ENCODE measurements at regions of chr21 and their contacts with region 1.

Region 1: DNA sequence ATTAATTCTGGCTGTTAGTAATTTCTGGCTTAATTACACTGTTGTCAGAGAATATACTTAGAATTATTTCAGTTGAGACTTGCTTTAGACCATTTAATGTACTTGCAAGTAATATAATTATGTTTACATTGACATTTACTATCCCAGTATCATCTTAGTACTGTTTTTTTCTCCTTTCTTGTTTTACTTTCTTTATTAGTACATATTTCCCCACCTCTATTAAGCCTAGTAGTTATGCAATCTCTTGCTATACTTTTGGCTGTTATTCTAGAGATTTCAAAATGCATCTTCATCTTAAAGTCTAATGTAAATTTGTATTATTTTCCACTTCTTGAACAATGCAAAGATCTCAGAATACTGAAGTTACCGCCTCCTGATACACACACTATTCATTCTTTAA is 24.4 kb downstream of the BRWD1 start:
- DNase-seq: no peak
- ATAC-seq: no peak
- H3K4me3 ChIP-seq: no peak overlapping the region
- H3K27ac ChIP-seq: no peak overlapping the region
- H3K4me1 ChIP-seq: no peaks in the 10 kb centered on the region
- H3K27me3 ChIP-seq: no peaks in the 10 kb centered on the region
- CTCF ChIP-seq: no peak

Region 2: DNA sequence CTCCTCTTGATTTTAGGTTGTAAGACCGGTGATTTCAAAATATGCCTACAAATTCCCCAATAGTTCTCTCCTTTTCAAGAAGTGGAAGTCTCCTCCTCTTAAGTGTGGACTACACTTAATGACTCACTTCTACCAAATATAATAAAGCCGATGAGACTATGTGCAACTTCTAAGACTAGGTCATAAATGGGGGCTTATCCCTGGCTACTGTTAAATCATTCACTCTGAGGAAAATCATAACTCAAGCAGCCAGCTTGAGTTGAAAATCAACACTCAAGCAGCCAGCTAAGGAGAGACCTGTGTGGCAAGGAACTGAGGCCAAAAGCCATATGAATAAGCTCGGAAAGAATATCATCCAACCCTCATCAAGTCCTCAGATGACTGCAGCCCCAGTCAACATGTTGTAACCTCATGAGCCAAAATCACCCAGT is 56.1 kb before region 1 on chr21:
- CTCF ChIA-PET with region 1: no interaction called
- POLR2A ChIA-PET with region 1: no interaction called
- intact Hi-C with region 1: no loop called
- DNase-seq: no peak
- ATAC-seq: peak; percentile 37
- H3K4me3 ChIP-seq: no peak overlapping the region
- H3K27ac ChIP-seq: no peak overlapping the region
- H3K4me1 ChIP-seq: no peaks in the 10 kb centered on the region
- H3K27me3 ChIP-seq: no peaks in the 10 kb centered on the region
- CTCF ChIP-seq: no peak

Region 3: DNA sequence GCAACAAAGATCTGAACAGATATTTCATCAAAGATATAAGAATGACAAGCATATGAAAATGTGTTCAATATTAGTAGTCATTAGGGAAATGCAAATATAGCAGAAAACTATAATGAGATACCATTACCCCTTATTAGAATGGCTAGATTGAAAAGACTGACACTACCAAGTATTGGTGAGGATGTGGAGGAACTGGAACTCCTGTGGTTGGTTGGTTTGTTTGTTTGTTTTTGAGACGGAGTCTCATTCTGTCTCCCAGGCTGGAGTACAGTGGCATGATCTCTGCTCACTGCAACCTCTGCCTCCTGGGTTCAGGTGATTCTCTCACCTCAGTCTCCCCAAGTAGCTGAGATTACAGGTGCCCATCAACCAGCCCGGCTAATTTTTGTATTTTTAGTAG is 78.8 kb after region 1 on chr21:
- CTCF ChIA-PET with region 1: no interaction called
- POLR2A ChIA-PET with region 1: interaction called, 23 read pairs
- intact Hi-C with region 1: no loop called
- DNase-seq: no peak
- ATAC-seq: no peak
- H3K4me3 ChIP-seq: no peak overlapping the region
- H3K27ac ChIP-seq: no peak overlapping the region
- H3K4me1 ChIP-seq: peaks cover 3% of the 10 kb centered on the region; the same call in 1 of the 2 replicates
- H3K27me3 ChIP-seq: no peaks in the 10 kb centered on the region
- CTCF ChIP-seq: no peak

Region 4: DNA sequence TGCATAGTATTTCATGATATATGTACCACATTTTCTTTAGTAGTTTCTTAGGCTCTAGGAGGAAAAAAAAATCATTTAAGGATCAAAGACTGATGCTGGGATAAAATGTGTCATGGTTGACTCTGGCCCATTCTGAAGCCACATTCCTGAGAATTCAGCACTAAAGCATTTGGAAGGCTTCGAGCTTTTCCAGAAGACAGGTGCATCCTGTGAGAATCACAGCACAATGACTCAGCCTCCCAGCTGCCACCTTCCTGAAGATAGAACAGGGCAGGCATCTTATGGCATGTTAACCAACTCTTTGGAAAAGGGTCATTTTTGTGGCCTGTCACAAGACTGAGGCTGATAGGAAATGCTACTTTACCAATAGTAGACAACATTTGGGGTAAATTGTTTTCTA is 938.1 kb after region 1 on chr21:
- CTCF ChIA-PET with region 1: no interaction called
- POLR2A ChIA-PET with region 1: no interaction called
- intact Hi-C with region 1: no loop called
- DNase-seq: no peak
- ATAC-seq: no peak
- H3K4me3 ChIP-seq: no peak overlapping the region
- H3K27ac ChIP-seq: no peak overlapping the region
- H3K4me1 ChIP-seq: no peaks in the 10 kb centered on the region
- H3K27me3 ChIP-seq: no peaks in the 10 kb centered on the region
- CTCF ChIP-seq: no peak